GM12878 (cell line): ENCODE measurements at regions of chr3 and their contacts with region 1.

Region 1: DNA sequence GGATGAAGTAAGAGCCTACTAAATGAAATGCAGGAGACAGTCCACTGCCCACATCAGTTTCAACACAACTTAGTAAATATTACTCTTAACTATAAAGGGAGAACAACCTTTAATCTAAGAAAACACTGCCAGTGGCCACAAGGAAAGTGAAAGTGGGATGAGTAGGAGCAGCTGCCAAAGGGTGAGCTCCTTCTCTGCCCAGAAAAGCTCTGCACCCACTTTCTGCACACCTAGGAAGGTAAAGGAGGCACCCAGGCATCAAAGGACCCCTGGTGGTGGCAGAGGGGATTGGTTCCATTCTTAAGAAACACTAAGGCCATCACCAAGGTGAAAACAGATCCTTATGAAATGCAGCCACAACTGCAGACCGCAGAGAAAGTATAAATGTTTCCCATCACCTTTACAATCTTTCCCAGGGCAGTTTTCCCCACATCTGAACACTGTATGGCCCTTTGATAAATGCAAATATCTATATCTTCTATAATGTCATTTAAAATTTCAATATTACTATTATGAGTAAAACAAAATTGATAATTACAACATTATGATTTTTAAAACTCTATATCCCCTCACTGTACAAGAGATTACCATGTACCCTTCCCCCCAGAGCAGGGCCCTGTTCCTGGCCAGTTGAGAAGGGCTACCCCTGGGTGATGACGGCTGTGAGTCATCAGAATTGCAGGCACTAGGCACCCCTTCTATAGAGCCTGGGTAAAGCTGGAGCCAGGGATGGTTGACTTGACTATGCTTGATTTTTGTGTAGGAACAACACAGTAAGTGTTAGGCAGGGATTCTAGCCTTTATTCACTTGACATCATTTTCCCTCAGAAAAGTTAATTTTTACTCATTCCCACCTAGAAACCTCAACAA is 92.0 kb downstream of the SNRK start:
- DNase-seq: peak; percentile 4
- ATAC-seq: peak; percentile 97
- H3K4me3 ChIP-seq: no peak overlapping the region
- H3K27ac ChIP-seq: no peak overlapping the region
- H3K4me1 ChIP-seq: no peaks in the 10 kb centered on the region
- H3K27me3 ChIP-seq: no peaks in the 10 kb centered on the region
- CTCF ChIP-seq: peak; percentile 81 to 85 (median 81)
- EP300 ChIP-seq: no peak
- POLR2A ChIP-seq: no peak
- RAD21 ChIP-seq: peak; percentile 86

Region 2: DNA sequence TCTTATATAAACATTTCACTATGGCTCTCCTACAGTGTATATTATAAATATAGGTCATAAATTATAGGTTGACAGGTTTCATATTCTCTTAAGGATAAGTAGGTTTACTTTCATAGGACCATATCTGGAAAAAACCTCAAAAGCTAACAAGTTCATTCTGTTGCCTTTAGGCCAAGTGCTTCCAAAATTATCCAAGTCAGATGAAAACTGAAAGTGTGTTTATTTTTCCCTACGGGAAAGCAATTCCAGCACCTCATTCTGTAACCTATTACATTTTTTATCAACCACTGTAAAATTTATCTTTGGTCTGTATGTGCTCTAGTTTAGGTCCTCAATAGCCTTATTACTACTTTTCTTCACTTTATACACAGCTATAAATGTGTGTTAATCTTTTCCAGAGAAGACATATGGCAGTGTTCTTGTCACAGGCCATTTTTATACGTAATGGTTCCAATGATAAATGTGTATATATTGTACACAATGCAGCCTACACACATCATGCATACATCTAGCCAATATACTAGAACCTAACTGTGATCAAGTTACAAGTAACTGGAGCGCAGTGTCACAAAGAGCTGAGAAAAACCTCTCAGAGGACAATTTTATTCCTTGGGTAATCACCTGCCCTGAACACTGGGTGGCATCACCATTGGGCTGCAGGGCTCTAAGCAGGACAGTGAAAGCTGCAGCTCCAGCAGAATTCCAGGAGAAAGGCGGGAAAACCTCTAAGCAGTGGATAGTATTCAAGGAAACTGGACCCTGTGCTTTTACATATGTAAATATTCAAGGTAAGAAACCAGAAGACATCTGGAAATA is 1927.7 kb before region 1 on chr3:
- CTCF ChIA-PET with region 1: no interaction called
- POLR2A ChIA-PET with region 1: no interaction called
- RAD21 ChIA-PET with region 1: no interaction called
- SMC1A ChIA-PET with region 1: no interaction called
- in situ Hi-C with region 1: no loop called
- intact Hi-C with region 1: no loop called
- DNase-seq: no peak
- ATAC-seq: no peak
- H3K4me3 ChIP-seq: no peak overlapping the region
- H3K27ac ChIP-seq: no peak overlapping the region
- H3K4me1 ChIP-seq: no peaks in the 10 kb centered on the region
- H3K27me3 ChIP-seq: no peaks in the 10 kb centered on the region
- CTCF ChIP-seq: no peak
- EP300 ChIP-seq: no peak
- POLR2A ChIP-seq: no peak
- RAD21 ChIP-seq: no peak

Region 3: GRCh38 chr3:43223670-43224364 is 154.5 kb before region 1 on chr3:
- CTCF ChIA-PET with region 1: interaction called, 12 read pairs
- POLR2A ChIA-PET with region 1: no interaction called
- RAD21 ChIA-PET with region 1: no interaction called
- SMC1A ChIA-PET with region 1: interaction called, 5 read pairs
- in situ Hi-C with region 1: no loop called
- intact Hi-C with region 1: loop called (anchors 10 kb)
- DNase-seq: no peak
- ATAC-seq: peak; percentile 52; the same call in 2 of the 3 replicates
- H3K4me3 ChIP-seq: no peak overlapping the region
- H3K27ac ChIP-seq: no peak overlapping the region
- H3K4me1 ChIP-seq: no peaks in the 10 kb centered on the region
- H3K27me3 ChIP-seq: no peaks in the 10 kb centered on the region
- CTCF ChIP-seq: peak in 1 of 3 experiments; percentile 14; a peak in 1 of 6 replicates
- EP300 ChIP-seq: no peak
- POLR2A ChIP-seq: no peak
- RAD21 ChIP-seq: peak; percentile 44

Region 4: DNA sequence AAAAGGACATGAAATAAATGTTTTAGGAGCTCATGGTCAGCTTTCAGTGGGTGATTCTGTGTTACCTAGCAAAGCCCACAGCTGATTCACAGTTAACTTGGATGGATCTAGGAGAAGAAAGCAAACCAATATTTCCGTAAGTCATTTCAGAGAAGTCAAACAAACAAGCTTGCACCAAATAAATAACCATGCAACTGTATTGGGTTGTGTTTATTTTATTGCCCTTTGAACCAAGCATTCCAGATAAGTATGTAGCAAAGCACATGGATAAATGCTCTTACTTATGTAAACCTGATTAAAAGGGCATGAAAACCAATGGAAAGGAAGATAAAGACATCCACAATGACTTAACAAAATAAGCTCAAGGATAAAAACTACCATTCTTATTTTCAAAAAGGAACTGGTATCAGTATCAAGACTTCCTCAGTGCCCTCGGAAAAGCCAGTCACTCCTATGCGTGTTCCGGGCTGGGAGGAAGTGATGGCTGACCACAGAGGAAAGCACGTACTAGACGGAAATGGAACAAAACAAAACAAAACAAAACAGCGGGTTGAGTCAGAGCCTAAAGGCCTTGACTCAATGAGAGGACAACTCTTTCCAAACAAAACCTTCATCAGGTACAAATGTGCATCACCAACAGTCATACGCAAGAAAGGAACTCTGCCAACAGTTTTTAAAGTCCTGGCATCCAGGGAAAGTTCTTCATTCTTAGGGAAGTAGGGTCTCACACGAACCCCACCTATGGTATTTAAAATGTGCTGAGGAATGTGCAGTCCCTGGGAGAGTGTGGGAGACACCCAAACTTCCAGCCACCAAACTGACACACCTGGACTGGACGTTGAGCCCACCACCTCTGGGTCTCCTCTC is 11.3 kb after region 1 on chr3:
- CTCF ChIA-PET with region 1: interaction called, 11 read pairs
- POLR2A ChIA-PET with region 1: no interaction called
- RAD21 ChIA-PET with region 1: interaction called, 3 read pairs
- SMC1A ChIA-PET with region 1: interaction called, 3 read pairs
- in situ Hi-C with region 1: no loop called
- intact Hi-C with region 1: no loop called
- DNase-seq: peak; percentile 19
- ATAC-seq: peak; percentile 69
- H3K4me3 ChIP-seq: no peak overlapping the region
- H3K27ac ChIP-seq: no peak overlapping the region
- H3K4me1 ChIP-seq: no peaks in the 10 kb centered on the region
- H3K27me3 ChIP-seq: no peaks in the 10 kb centered on the region
- CTCF ChIP-seq: no peak
- EP300 ChIP-seq: no peak
- POLR2A ChIP-seq: no peak
- RAD21 ChIP-seq: no peak